Ascending aorta (tissue), 2 donors: ENCODE measurements at regions of chr12 and their contacts with region 1.

Region 1: GRCh38 chr12:102119674-102120563 is at the starts of genes NUP37 and PARPBP:
- DNase-seq: peak; percentile 43 to 93
- H3K4me3 ChIP-seq: peak within 1 kb of the TSS; percentile 65 to 67
- H3K27ac ChIP-seq: peak within 1 kb of the TSS; percentile 65 to 77
- H3K4me1 ChIP-seq: peaks cover 0 to 13% of the 10 kb centered on the region in 2 donors
- H3K27me3 ChIP-seq: no peaks in the 10 kb centered on the region
- CTCF ChIP-seq: no peak
- total RNA-seq, gene NUP37: 66.9 TPM
- total RNA-seq, gene PARPBP: 0.64 TPM

Region 2: GRCh38 chr12:101925361-101925760 is 194.6 kb before region 1 on chr12:
- intact Hi-C with region 1: no loop called
- DNase-seq: peak in 1 of 2 donors; percentile 79
- H3K4me3 ChIP-seq: no peak overlapping the region
- H3K27ac ChIP-seq: peak overlapping the region in 1 of 2 donors; percentile 40
- H3K4me1 ChIP-seq: no peaks in the 10 kb centered on the region
- H3K27me3 ChIP-seq: no peaks in the 10 kb centered on the region
- CTCF ChIP-seq: no peak

Region 3: GRCh38 chr12:101995684-101996083 is 124.2 kb before region 1 on chr12:
- intact Hi-C with region 1: no loop called
- DNase-seq: no peak
- H3K4me3 ChIP-seq: no peak overlapping the region
- H3K27ac ChIP-seq: no peak overlapping the region
- H3K4me1 ChIP-seq: no peaks in the 10 kb centered on the region
- H3K27me3 ChIP-seq: no peaks in the 10 kb centered on the region
- CTCF ChIP-seq: no peak

Region 4: DNA sequence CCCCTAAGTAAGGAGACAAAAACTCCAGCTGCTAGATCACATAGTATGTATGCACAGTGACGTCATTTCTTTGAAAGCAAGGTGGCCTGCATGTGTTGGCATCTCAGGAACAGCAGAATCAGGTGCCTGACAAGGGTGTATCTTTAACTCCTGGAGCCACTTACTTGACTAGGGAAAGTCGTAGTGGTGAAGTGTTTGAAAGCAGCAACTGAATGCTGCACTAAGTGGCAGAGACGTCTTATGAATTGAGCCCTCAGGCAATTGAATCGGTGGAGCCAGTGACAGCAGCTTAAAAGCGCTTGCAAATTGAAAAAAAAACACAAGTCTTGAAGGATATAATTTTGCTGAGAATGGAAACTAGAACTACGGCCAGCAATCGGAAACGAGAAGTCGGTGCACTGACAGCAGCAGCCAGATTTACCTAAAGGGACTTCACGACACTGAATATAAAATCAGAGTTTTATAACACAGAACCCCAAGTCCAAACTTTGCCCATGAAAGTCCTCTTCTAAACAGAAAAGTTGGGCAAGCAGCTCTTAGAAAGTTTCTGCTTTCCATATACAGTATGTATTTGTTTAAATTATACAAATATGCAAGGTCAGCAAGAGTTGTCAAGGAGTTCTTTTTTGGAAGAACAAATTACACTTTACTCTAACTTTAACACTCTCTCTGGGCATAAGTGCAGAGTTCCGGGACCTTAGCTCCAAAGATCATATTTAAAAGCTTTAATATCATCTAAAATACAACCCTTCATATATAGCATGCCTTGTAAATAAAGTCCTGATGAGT is 359.4 kb after region 1 on chr12:
- intact Hi-C with region 1: loop called (anchors 2 kb)
- DNase-seq: no peak
- H3K4me3 ChIP-seq: peak overlapping the region; percentile 44 to 47
- H3K27ac ChIP-seq: peak overlapping the region in 1 of 2 donors; percentile 9
- H3K4me1 ChIP-seq: peaks cover 0 to 15% of the 10 kb centered on the region in 2 donors
- H3K27me3 ChIP-seq: no peaks in the 10 kb centered on the region
- CTCF ChIP-seq: no peak